PC-9 (cell line): ENCODE measurements at regions of chr4 and their contacts with region 1.

Region 1: DNA sequence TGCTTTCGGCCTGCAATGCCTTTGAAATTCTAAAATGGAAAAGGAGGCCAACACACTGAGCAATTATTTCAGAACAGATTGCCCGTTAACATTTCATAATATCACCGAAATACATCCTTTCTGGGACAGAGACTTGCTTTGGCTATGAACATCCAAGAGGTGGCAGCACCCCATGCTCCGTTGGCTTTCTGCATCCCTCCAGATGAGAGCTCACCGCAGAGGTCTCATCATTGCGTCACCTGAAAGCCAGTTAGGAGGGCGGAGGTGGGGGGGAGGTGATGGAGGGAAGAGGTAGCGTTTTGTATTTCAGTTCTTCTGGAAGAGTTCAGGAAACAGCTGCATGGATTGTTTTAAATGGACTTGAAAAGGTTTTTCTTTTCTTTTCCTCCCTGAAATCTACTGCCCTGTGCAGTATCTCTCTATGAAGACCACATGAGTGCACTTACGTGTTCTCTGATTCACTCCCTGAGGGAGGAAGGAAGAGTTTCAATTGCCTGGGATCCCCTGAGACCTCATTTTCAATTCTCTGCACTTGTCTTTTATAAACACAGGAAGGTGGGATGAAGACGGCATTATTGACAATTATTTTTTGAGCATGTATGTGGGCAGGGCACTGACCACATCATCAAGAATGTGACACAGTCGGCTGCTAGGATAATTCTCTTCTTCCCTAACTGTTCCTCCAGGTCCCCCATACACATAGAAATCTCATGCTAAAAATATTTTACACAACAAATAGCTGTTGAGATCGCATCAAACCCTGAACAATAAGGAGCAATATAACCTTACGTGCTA is 166.9 kb upstream of the PGRMC2 start:
- DNase-seq: peak; percentile 67 to 78
- H3K4me3 ChIP-seq: no peak overlapping the region
- H3K27ac ChIP-seq: no peak overlapping the region
- H3K4me1 ChIP-seq: peaks cover 4% of the 10 kb centered on the region; the same call in 1 of the 2 replicates
- H3K27me3 ChIP-seq: no peaks in the 10 kb centered on the region
- CTCF ChIP-seq: peak; percentile 85

Region 2: DNA sequence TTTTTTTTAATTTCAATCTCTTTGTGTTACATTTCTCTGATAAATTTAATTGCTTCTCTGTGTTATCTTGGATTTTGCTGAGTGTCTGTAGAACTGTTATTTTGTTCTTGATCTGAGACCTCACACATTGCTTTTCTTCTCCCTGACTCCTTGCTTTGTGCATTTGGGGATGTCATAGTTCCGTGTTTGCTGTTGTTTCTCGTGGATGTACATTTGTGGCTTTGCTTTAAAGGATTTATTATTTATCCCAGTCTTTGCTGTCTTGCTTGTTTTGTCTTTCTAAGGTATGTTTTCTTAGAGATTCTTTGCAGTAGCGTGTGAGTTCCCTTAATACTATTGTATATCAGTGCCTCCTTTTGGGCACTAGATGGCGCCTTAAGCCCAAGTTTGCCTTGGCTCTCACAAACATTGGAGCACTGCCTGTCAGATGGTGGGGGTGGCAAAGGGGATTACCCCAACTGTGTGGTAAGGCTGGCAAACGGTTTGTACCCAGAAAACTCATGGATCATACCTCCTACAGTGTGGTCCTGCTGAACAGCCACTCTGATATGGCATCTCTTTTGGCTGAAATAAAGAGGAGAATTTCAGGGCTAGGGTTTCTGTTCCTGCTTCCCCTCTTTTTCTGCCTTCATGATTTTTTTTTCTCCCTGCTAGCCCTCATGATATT is 263.2 kb before region 1 on chr4:
- CTCF ChIA-PET with region 1: no interaction called
- POLR2A ChIA-PET with region 1: no interaction called
- intact Hi-C with region 1: loop called (anchors 1 kb)
- DNase-seq: peak; percentile 45 to 55
- H3K4me3 ChIP-seq: no peak overlapping the region
- H3K27ac ChIP-seq: no peak overlapping the region
- H3K4me1 ChIP-seq: no peaks in the 10 kb centered on the region
- H3K27me3 ChIP-seq: no peaks in the 10 kb centered on the region
- CTCF ChIP-seq: peak; percentile 89

Region 3: DNA sequence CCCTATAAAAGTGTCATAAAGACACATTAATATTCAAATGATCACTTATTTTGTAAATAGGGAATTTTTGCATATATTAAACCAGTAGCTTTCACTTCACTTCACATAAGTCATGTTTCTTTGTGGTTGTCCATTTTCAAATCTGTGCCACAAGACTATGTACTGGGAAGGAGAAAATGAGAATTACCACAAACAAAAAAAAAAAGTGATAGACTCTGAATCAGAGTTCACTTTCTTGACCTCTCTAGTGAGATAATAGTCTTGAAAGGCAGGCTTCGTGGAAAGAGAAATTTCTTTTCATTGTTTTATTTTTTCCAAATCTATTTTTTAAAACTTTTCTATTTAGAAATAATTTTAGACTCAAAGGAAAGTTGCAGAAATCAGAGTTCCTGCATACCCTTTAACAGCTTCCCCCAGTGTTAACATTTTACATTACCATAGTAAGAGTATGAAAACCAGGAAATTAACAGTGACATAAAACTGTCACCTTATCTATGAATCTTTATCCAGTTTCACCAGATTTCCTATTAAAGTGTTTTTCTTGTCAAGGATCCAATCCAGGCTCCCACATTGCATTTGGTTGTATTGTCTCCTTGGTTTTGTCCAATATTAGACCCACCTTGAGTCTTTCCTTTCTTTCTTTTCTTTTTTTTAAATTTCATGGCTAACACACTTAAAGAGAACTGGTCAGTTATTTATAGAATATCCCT is 48.5 kb after region 1 on chr4:
- CTCF ChIA-PET with region 1: no interaction called
- POLR2A ChIA-PET with region 1: no interaction called
- intact Hi-C with region 1: no loop called
- DNase-seq: no peak
- H3K4me3 ChIP-seq: no peak overlapping the region
- H3K27ac ChIP-seq: no peak overlapping the region
- H3K4me1 ChIP-seq: no peaks in the 10 kb centered on the region
- H3K27me3 ChIP-seq: no peaks in the 10 kb centered on the region
- CTCF ChIP-seq: no peak

Region 4: GRCh38 chr4:128528793-128529553 is 74.5 kb after region 1 on chr4:
- CTCF ChIA-PET with region 1: interaction called, 3 read pairs
- POLR2A ChIA-PET with region 1: no interaction called
- intact Hi-C with region 1: loop called (anchors 1 kb)
- DNase-seq: peak; percentile 65 to 97
- H3K4me3 ChIP-seq: no peak overlapping the region
- H3K27ac ChIP-seq: peak overlapping the region; percentile 80
- H3K4me1 ChIP-seq: peaks cover 60% of the 10 kb centered on the region
- H3K27me3 ChIP-seq: no peaks in the 10 kb centered on the region
- CTCF ChIP-seq: no peak

Region 5: GRCh38 chr4:128565565-128566186 is 111.2 kb after region 1 on chr4:
- CTCF ChIA-PET with region 1: no interaction called
- POLR2A ChIA-PET with region 1: interaction called, 3 read pairs
- intact Hi-C with region 1: loop called (anchors 5 kb)
- DNase-seq: no peak
- H3K4me3 ChIP-seq: no peak overlapping the region
- H3K27ac ChIP-seq: no peak overlapping the region
- H3K4me1 ChIP-seq: no peaks in the 10 kb centered on the region
- H3K27me3 ChIP-seq: no peaks in the 10 kb centered on the region
- CTCF ChIP-seq: peak; percentile 23; the same call in 1 of the 2 replicates

Region 6: GRCh38 chr4:129093191-129093920 is 638.9 kb after region 1 on chr4 and contains the start of gene SCLT1:
- CTCF ChIA-PET with region 1: no interaction called
- POLR2A ChIA-PET with region 1: no interaction called
- intact Hi-C with region 1: loop called (anchors 10 kb)
- DNase-seq: peak; percentile 90 to 97
- H3K4me3 ChIP-seq: peak within 1 kb of the TSS; percentile 77
- H3K27ac ChIP-seq: peak within 1 kb of the TSS; percentile 72
- H3K4me1 ChIP-seq: peaks cover 18% of the 10 kb centered on the region
- H3K27me3 ChIP-seq: no peaks in the 10 kb centered on the region
- CTCF ChIP-seq: no peak
- total RNA-seq, gene SCLT1: 15.9 and 16.9 TPM in 2 replicates